Ovary (tissue), 10 donors: ENCODE measurements at regions of chr7 and their contacts with region 1.

Region 1: GRCh38 chr7:67371429-67372305 is 375.0 kb downstream of the TYW1 start:
- DNase-seq: peak; percentile 34 to 60 (median 51)
- H3K4me3 ChIP-seq: no peak overlapping the region
- H3K27ac ChIP-seq: no peak overlapping the region
- H3K4me1 ChIP-seq: no peaks in the 10 kb centered on the region
- H3K27me3 ChIP-seq: no peaks in the 10 kb centered on the region
- CTCF ChIP-seq: peak; percentile 62 to 67 (median 64)
- EP300 ChIP-seq: no peak
- POLR2A ChIP-seq: no peak

Region 2: GRCh38 chr7:67625257-67625737 is 253.6 kb after region 1 on chr7:
- intact Hi-C with region 1: loop called in 1 of 4 experiments (anchors 10 kb)
- DNase-seq: peak; percentile 87 to 92 (median 89)
- H3K4me3 ChIP-seq: no peak overlapping the region
- H3K27ac ChIP-seq: no peak overlapping the region
- H3K4me1 ChIP-seq: no peaks in the 10 kb centered on the region
- H3K27me3 ChIP-seq: no peaks in the 10 kb centered on the region
- CTCF ChIP-seq: peak; percentile 72 to 87 (median 85)
- EP300 ChIP-seq: no peak
- POLR2A ChIP-seq: no peak